Stomach (tissue), 19 donors: ENCODE measurements at regions of chr1 and their contacts with region 1.

Region 1: DNA sequence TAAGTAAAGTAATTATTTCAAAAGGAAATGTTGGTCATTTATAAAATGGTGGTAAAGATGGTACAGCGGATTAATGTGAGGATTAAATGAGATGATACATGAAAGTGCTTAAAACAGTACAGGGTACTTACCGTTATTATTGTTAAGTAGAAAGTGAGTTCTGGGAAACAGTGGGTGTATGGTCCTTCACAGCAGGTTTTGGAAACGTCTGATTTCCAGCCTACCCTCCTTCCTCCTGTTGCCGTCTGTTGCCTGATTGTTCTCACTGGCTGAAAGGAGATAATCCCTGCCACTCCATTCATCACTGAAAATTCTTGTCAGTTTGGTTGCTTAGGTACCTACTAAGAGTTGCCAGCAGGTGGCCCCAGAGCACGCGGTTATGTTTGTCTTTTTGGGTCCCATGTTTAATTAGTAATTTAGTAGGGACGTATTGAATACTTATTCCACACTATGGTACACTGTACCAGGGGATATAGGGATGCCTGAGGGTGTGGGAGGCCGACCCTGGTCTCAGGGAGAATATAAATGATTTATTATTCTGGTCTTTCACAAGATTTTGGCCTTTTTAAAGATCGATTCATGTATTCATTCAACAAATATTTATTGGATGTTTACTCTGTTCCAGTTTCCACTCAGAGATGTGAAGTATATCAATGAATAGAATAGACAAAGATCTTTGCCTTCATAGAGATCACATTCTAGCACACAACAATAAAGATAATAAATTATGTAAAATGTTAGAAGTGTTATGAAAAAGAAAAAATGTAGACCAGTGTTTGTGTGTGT is 30.8 kb upstream of the RPTN start:
- DNase-seq: peak; percentile 57 to 75
- H3K4me3 ChIP-seq: peak overlapping the region; percentile 49 to 57 (median 54)
- H3K27ac ChIP-seq: peak overlapping the region in 1 of 5 donors; percentile 81
- H3K4me1 ChIP-seq: peaks cover 0 to 28% (median 14%) of the 10 kb centered on the region in 4 donors
- H3K27me3 ChIP-seq: peaks cover 0 to 11% (median 5%) of the 10 kb centered on the region in 3 donors
- CTCF ChIP-seq: peak in 5 of 7 experiments; percentile 28 to 66 (median 55)
- EP300 ChIP-seq: no peak
- POLR2A ChIP-seq: no peak

Region 2: GRCh38 chr1:152318148-152318547 is 128.3 kb after region 1 on chr1:
- intact Hi-C with region 1: no loop called
- DNase-seq: no peak
- H3K4me3 ChIP-seq: no peak overlapping the region
- H3K27ac ChIP-seq: no peak overlapping the region
- H3K4me1 ChIP-seq: no peaks in the 10 kb centered on the region
- H3K27me3 ChIP-seq: no peaks in the 10 kb centered on the region
- CTCF ChIP-seq: no peak
- EP300 ChIP-seq: no peak
- POLR2A ChIP-seq: no peak

Region 3: GRCh38 chr1:152459596-152460528 is 270.0 kb after region 1 on chr1:
- intact Hi-C with region 1: loop called (anchors 5 kb)
- DNase-seq: peak; percentile 72 to 79
- H3K4me3 ChIP-seq: peak overlapping the region in 1 of 4 donors; percentile 7
- H3K27ac ChIP-seq: peak overlapping the region in 4 of 5 donors; percentile 3 to 32 (median 16)
- H3K4me1 ChIP-seq: peaks cover 0 to 11% (median 9%) of the 10 kb centered on the region in 4 donors
- H3K27me3 ChIP-seq: no peaks in the 10 kb centered on the region
- CTCF ChIP-seq: peak in 5 of 7 experiments; percentile 4 to 72 (median 69)
- EP300 ChIP-seq: no peak
- POLR2A ChIP-seq: no peak